Right cardiac atrium (tissue), 5 donors: ENCODE measurements at regions of chr4 and their contacts with region 1.

Region 1: GRCh38 chr4:83639849-83640493 is 104.1 kb downstream of the GPAT3 start:
- DNase-seq: no peak
- ATAC-seq: peak; percentile 77 to 83
- H3K4me3 ChIP-seq: no peak overlapping the region
- H3K27ac ChIP-seq: no peak overlapping the region
- H3K4me1 ChIP-seq: no peaks in the 10 kb centered on the region
- H3K27me3 ChIP-seq: no peaks in the 10 kb centered on the region

Region 2: DNA sequence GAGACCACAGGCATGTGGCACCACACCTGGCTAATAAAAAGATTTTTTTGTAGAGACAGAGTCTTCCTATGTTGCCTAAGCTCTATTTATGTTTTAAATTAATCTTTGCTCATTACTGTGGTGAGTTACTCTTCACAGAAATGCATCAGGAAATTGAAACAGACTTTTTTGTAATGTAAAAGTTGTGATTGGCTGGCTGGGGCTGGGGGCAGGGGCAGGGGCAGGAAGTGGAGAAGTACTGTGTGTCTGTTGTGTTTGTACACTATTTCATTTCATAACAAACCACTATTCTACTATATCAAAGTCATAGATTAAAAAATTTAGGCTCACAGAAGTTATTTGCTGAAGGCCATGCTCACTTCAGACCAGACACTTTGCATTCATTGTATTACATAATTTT is 136.0 kb before region 1 on chr4:
- intact Hi-C with region 1: loop called in 3 of 4 experiments (anchors 2 to 5 kb)
- DNase-seq: no peak
- ATAC-seq: no peak
- H3K4me3 ChIP-seq: no peak overlapping the region
- H3K27ac ChIP-seq: no peak overlapping the region
- H3K4me1 ChIP-seq: no peaks in the 10 kb centered on the region
- H3K27me3 ChIP-seq: no peaks in the 10 kb centered on the region

Region 3: GRCh38 chr4:83510442-83510841 is 129.5 kb before region 1 on chr4:
- intact Hi-C with region 1: loop called (anchors 2 to 5 kb)
- DNase-seq: no peak
- ATAC-seq: no peak
- H3K4me3 ChIP-seq: no peak overlapping the region
- H3K27ac ChIP-seq: no peak overlapping the region
- H3K4me1 ChIP-seq: no peaks in the 10 kb centered on the region
- H3K27me3 ChIP-seq: no peaks in the 10 kb centered on the region

Region 4: DNA sequence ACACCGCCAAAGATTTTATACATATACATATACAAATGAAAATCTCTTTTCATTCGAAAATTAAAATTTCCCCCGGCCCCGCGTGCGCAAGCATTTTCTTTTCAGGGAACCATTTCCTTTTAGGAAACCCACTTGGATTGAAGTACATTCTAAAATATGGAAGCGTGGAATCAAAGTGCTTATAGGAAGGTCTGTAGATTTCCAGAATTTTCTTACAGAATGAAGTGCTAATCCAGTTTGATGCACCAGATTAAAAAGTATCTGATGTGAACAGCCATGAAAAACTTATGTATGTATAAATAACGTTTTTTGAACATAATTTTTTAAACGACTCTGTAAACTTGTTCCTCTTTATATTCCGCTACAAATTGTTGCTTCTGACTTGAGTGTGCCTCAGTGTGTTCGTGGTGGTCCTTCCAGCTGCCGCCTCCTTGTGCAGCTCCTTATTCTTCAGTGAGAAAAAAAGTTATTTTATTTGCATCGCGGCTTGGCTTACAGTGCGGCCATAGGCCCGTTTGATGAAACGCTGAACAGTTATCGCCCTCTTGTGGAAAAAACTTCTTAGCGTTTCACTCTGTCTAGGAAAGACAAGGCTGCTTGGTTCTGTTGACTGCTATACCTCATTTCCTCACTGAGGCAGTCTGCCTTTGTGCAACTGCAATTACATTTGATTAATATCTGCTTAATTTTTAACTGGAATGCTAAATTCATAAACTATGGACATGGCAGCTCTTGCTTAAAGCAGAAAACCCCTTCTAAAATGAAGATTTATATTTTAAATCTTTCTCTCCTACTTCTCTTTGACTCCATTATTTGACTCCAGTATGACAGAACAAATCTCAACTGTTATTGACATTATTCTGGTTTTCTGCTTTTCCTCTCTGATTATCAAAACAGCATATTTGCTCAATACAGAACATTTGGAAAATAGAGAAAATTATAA is 863.8 kb after region 1 on chr4:
- intact Hi-C with region 1: loop called in 3 of 4 experiments (anchors 10 kb)
- DNase-seq: peak in 1 of 3 donors; percentile 32
- ATAC-seq: peak; percentile 73 to 75
- H3K4me3 ChIP-seq: no peak overlapping the region
- H3K27ac ChIP-seq: no peak overlapping the region
- H3K4me1 ChIP-seq: no peaks in the 10 kb centered on the region
- H3K27me3 ChIP-seq: peaks cover 8% of the 10 kb centered on the region